CD14-positive monocyte (primary cell): ENCODE measurements at regions of chr6 and their contacts with region 1.

Region 1: DNA sequence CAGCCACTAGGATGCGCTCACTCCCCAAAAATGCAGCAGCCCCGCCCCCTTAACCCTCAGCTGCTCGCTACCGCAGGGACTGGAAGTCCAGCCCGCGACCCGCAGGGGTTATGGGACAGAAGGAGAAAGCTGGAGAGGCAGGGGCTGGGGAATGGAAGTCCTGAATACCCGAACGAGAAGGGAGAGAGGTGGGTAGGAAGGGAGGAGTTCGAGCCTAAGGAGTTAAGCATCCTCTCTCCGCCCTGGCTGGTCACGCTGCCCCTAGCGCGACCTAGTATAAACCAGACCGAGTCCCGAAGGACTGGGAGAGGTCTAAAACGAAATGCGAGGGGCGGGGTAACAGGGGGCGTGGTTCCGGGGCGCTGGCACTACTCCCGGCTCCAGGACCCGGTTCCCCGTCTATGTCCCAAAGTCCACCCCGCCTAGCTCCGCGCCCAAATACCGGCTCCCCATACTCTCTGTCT is 448 bp upstream of the DDAH2 start:
- DNase-seq: peak; percentile 75 to 83 (median 78)
- H3K4me3 ChIP-seq: peak overlapping the region; percentile 68 to 87 (median 81)
- H3K4me3 Mint-ChIP-seq: peak overlapping the region; percentile 96
- H3K27ac ChIP-seq: peak overlapping the region; percentile 94 to 96
- H3K27ac Mint-ChIP-seq: peak overlapping the region; percentile 96 to 99 (median 98)
- H3K4me1 ChIP-seq: peaks cover 76 to 90% of the 10 kb centered on the region in 2 donors
- H3K4me1 Mint-ChIP-seq: peaks cover 73% of the 10 kb centered on the region
- H3K27me3 ChIP-seq: no peaks in the 10 kb centered on the region
- H3K27me3 Mint-ChIP-seq: peaks cover 0 to 4% (median 4%) of the 10 kb centered on the region in 3 donors
- CTCF ChIP-seq: peak; percentile 80

Region 2: GRCh38 chr6:31493875-31494694 is 235.5 kb before region 1 on chr6:
- intact Hi-C with region 1: no loop called
- DNase-seq: peak; percentile 68 to 77 (median 77)
- H3K4me3 ChIP-seq: peak overlapping the region; percentile 81 to 98 (median 87)
- H3K4me3 Mint-ChIP-seq: peak overlapping the region; percentile 94 to 95
- H3K27ac ChIP-seq: peak overlapping the region; percentile 82 to 83
- H3K27ac Mint-ChIP-seq: peak overlapping the region; percentile 87 to 96 (median 94)
- H3K4me1 ChIP-seq: peaks cover 51 to 62% of the 10 kb centered on the region in 2 donors
- H3K4me1 Mint-ChIP-seq: peaks cover 56% of the 10 kb centered on the region
- H3K27me3 ChIP-seq: no peaks in the 10 kb centered on the region
- H3K27me3 Mint-ChIP-seq: peaks cover 0 to 2% (median 0%) of the 10 kb centered on the region in 3 donors
- CTCF ChIP-seq: peak; percentile 92

Region 3: DNA sequence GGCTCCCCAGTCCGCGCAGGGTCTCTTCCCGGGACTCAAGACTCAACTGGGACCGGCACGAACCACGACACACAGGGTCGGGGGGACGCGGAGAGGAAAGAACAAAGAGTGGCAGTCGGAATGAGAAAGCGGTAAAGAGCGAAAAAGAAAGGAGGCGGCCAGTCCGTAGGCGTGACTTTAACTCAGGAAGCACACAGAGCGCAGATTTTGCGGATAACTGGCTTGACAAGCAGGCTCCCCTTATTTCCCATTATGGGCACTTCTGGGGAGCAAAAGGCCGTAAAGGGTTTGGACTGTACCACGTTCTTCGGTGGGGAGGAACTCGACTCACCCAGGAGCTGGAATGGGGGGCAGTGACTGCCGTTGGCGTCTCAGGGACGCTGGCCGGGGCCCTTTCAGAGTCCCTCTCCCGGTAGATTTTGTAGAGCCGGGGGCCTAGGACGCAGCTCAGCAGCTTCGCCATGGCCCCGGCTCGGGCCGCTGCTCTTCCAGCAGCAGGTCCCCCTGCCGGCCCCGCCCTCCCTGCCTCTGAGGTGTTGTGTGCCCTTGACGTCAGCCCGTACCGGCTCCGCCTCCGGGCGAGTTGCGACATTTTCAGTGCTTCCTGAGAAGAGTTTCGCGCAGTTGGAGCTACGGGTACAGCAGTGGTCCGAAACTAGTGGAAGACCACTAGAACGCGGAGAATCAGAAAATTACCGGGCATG is 26.6 kb before region 1 on chr6 and contains the start of gene ABHD16A:
- intact Hi-C with region 1: loop called in 1 of 2 experiments (anchors 2 kb)
- DNase-seq: peak; percentile 96 to 97 (median 96)
- H3K4me3 ChIP-seq: peak within 1 kb of the TSS; percentile 92 to 98 (median 97)
- H3K4me3 Mint-ChIP-seq: peak within 1 kb of the TSS; percentile 98 to 100
- H3K27ac ChIP-seq: peak within 1 kb of the TSS; percentile 94 to 96
- H3K27ac Mint-ChIP-seq: peak within 1 kb of the TSS; percentile 99 to 100 (median 99)
- H3K4me1 ChIP-seq: peaks cover 20 to 26% of the 10 kb centered on the region in 2 donors
- H3K4me1 Mint-ChIP-seq: peaks cover 23% of the 10 kb centered on the region
- H3K27me3 ChIP-seq: no peaks in the 10 kb centered on the region
- H3K27me3 Mint-ChIP-seq: peaks cover 0 to 1% (median 0%) of the 10 kb centered on the region in 3 donors
- CTCF ChIP-seq: no peak
- polyA plus RNA-seq, gene ABHD16A: 53.0 to 122 (median 56.0) TPM

Region 4: DNA sequence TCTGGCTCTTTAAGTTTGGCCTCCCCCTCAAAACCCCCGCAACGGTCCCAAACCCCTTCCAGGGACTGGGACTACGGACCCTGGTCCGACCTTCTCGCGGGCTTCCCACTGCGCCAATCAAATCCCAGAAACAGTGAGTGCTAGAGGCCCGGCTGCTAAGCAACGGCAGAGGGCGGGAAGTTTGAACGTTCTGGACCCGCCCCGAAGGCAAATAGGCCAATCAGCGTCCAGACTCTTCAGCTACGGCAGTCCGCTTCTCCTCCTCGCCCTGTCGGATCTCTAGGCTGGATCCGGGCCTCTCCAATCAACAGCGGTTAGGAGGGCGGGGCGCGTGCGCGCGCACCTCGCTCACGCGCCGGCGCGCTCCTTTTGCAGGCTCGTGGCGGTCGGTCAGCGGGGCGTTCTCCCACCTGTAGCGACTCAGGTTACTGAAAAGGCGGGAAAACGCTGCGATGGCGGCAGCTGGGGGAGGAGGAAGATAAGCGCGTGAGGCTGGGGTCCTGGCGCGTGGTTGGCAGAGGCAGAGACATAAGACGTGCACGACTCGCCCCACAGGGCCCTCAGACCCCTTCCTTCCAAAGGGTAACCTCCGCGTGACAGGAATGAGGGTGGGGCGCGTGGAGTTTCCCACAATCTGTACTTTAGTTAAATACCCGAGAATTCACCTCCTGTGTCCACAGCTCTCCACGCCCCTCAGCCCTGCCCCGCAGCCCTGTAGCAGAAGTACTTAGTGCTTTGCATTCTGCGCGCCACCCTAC is 10.3 kb after region 1 on chr6 and contains the start of gene MSH5:
- intact Hi-C with region 1: loop called in 1 of 2 experiments (anchors 1 kb)
- DNase-seq: peak; percentile 97 to 100 (median 98)
- H3K4me3 ChIP-seq: peak within 1 kb of the TSS; percentile 58 to 100 (median 71)
- H3K4me3 Mint-ChIP-seq: peak within 1 kb of the TSS; percentile 92 to 98
- H3K27ac ChIP-seq: peak within 1 kb of the TSS; percentile 91 to 99
- H3K27ac Mint-ChIP-seq: peak within 1 kb of the TSS; percentile 95 to 100 (median 99)
- H3K4me1 ChIP-seq: peaks cover 42 to 54% of the 10 kb centered on the region in 2 donors
- H3K4me1 Mint-ChIP-seq: peaks cover 50% of the 10 kb centered on the region
- H3K27me3 ChIP-seq: no peaks in the 10 kb centered on the region
- H3K27me3 Mint-ChIP-seq: peaks cover 0 to 2% (median 2%) of the 10 kb centered on the region in 3 donors
- CTCF ChIP-seq: no peak
- polyA plus RNA-seq, gene MSH5: 0.58 to 31.2 (median 1.9) TPM

Region 5: GRCh38 chr6:31769684-31770371 is 40.3 kb after region 1 on chr6:
- intact Hi-C with region 1: loop called (anchors 2 to 5 kb)
- DNase-seq: peak; percentile 66 to 79 (median 79)
- H3K4me3 ChIP-seq: peak overlapping the region in 1 of 3 experiments; percentile 55
- H3K4me3 Mint-ChIP-seq: no peak overlapping the region
- H3K27ac ChIP-seq: peak overlapping the region; percentile 82 to 88
- H3K27ac Mint-ChIP-seq: peak overlapping the region; percentile 91 to 96 (median 94)
- H3K4me1 ChIP-seq: peaks cover 29 to 30% of the 10 kb centered on the region in 2 donors
- H3K4me1 Mint-ChIP-seq: peaks cover 29% of the 10 kb centered on the region
- H3K27me3 ChIP-seq: no peaks in the 10 kb centered on the region
- H3K27me3 Mint-ChIP-seq: peaks cover 0 to 11% (median 3%) of the 10 kb centered on the region in 3 donors
- CTCF ChIP-seq: peak; percentile 78

Region 6: DNA sequence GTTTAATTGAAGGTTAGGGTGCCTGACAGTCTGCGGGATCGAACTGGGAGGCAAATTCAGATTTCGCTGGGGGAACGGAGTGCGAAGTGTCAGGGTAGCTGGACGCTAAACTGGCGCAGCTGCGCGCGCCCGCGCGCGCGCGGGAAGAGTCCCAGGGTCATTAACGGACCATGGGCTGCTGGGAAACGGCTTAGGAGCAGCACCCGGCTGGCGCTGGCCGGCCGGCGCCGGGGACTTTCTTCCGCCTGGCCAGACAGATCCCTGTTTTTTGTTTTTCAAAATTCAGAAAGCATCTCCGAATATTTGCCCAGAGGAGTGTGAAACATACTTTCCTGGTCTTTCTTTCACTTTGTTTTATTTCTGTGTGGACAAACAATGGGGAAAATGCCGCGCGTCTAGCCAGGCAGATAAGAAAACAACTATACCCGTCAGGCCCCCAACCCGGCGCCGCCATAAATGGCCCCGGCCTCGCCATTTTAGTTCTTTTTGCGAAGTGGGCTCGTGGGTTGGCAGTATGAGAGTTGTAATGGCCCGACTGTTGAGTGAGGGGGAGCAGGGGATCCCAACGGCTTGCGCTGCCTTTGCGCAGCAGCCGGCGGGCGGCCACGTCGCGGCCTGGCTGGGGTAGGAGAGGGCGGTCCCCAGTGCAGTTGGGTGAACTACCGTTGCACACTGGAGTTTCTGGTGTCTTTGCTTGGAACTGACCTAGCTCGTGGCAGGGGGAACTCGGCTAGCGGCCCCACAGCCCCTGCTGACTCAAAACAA is 105.1 kb after region 1 on chr6:
- intact Hi-C with region 1: loop called (anchors 5 to 10 kb)
- DNase-seq: peak; percentile 75 to 81 (median 77)
- H3K4me3 ChIP-seq: peak overlapping the region; percentile 83 to 89 (median 86)
- H3K4me3 Mint-ChIP-seq: peak overlapping the region; percentile 98 to 99
- H3K27ac ChIP-seq: peak overlapping the region; percentile 87 to 92
- H3K27ac Mint-ChIP-seq: peak overlapping the region; percentile 97 to 100 (median 98)
- H3K4me1 ChIP-seq: peaks cover 70 to 82% of the 10 kb centered on the region in 2 donors
- H3K4me1 Mint-ChIP-seq: peaks cover 56% of the 10 kb centered on the region
- H3K27me3 ChIP-seq: no peaks in the 10 kb centered on the region
- H3K27me3 Mint-ChIP-seq: no peaks in the 10 kb centered on the region
- CTCF ChIP-seq: no peak